Breast epithelium (tissue), 4 donors: ENCODE measurements at regions of chr7 and their contacts with region 1.

Region 1: GRCh38 chr7:47600199-47601118 is 18.5 kb upstream of the TNS3 start:
- DNase-seq: no peak
- H3K4me3 ChIP-seq: no peak overlapping the region
- H3K27ac ChIP-seq: no peak overlapping the region
- H3K4me1 ChIP-seq: peaks cover 0 to 15% of the 10 kb centered on the region in 2 donors
- H3K27me3 ChIP-seq: no peaks in the 10 kb centered on the region
- CTCF ChIP-seq: no peak
- POLR2A ChIP-seq: no peak

Region 2: DNA sequence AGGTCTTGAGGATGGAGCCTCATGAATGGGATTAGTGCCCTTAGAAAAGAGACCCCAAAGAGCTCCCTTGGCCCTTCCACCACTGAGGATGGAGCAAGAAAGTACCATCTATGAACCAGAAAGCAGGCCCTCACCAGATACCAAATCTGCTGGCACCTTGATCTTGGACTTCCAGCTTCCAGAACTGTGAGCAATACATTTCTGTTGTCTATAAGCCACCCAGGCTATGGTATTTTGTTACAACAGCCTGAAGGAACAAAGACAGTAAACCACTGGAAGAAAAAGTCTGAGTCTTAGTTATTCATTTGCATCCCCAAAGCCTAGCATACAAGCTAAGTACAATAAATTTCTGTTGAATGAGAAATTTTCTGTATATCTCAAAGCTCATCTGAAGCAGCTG is 19.3 kb after region 1 on chr7:
- intact Hi-C with region 1: loop called (anchors 2 kb)
- DNase-seq: no peak
- H3K4me3 ChIP-seq: no peak overlapping the region
- H3K27ac ChIP-seq: no peak overlapping the region
- H3K4me1 ChIP-seq: no peaks in the 10 kb centered on the region
- H3K27me3 ChIP-seq: no peaks in the 10 kb centered on the region
- CTCF ChIP-seq: no peak
- POLR2A ChIP-seq: no peak